PC-9 (cell line): ENCODE measurements at regions of chr3 and their contacts with region 1.

Region 1: DNA sequence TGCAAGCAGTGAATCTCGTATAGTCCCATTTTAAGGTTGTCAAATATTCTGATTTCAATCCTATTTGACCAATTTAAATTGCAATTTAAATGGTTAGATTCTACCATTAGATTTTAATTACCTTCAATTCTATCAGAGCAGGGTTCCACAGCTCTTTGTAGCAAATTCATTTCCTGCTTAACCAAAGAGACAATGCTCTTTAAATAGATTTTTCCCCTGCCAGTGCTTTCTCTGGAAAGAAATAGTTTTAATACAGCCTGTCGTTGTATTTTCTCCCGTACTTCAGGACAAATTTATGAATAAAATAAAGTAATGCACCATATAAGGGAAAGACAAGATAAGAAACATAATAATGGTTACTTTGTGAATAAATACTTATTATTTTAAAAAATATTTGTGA is 62.8 kb downstream of the ZPLD1 start:
- DNase-seq: no peak
- H3K4me3 ChIP-seq: no peak overlapping the region
- H3K27ac ChIP-seq: no peak overlapping the region
- H3K4me1 ChIP-seq: no peaks in the 10 kb centered on the region
- H3K27me3 ChIP-seq: no peaks in the 10 kb centered on the region
- CTCF ChIP-seq: no peak

Region 2: GRCh38 chr3:101709126-101709525 is 788.4 kb before region 1 on chr3:
- CTCF ChIA-PET with region 1: no interaction called
- POLR2A ChIA-PET with region 1: interaction called, 10 read pairs
- intact Hi-C with region 1: no loop called
- DNase-seq: no peak
- H3K4me3 ChIP-seq: no peak overlapping the region
- H3K27ac ChIP-seq: no peak overlapping the region
- H3K4me1 ChIP-seq: peaks cover 4% of the 10 kb centered on the region; the same call in 1 of the 2 replicates
- H3K27me3 ChIP-seq: no peaks in the 10 kb centered on the region
- CTCF ChIP-seq: no peak